Heart right ventricle (tissue), 16 donors: ENCODE measurements at regions of chr2 and their contacts with region 1.

Region 1: DNA sequence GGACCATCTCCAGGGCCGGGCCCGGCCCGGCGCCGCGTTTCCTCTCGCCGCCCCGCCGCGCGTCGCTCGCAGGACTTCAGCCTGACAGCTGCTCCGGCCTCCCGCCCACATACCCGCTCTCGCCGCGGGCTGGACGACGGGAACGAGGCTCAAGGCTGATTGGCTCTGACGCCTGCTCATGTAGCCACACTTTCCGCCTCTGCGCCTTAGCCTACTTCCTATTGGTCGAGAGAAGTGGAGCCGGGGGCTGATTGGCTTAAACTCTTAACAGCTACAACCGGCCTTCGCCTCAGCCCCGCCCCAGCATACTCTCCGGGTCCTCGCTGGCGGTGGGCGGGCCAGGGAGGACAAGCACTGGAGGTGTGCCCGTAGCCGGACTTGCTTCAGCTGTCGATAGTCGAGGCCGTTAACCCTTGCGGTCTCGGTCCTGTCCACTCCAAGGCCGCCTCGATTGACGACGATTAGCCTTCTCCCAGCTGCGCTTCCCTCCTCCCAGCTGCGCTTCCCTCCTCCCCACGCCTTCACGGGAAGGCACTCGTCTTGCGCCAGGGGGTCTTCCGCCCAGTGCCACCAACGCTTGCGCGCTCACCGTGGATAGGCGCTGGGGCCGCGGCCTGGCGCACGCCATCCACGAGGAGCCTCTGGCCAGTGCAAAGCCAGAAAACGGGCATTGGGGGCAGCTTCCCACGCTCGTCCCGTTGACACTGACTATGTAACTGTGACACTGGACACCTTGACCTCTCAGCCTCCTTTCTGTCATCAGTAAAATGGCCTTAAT is at the start of gene PRADC1:
- DNase-seq: peak; percentile 95 to 99
- ATAC-seq: peak; percentile 91 to 97 (median 96)
- H3K4me3 ChIP-seq: peak within 1 kb of the TSS; percentile 70 to 95 (median 88)
- H3K27ac ChIP-seq: peak within 1 kb of the TSS; percentile 88 to 98 (median 94)
- H3K4me1 ChIP-seq: peaks cover 2 to 47% (median 35%) of the 10 kb centered on the region in 9 donors
- H3K27me3 ChIP-seq: no peaks in the 10 kb centered on the region
- CTCF ChIP-seq: no peak
- total RNA-seq, gene PRADC1: 61.2 to 96.5 (median 76.6) TPM

Region 2: DNA sequence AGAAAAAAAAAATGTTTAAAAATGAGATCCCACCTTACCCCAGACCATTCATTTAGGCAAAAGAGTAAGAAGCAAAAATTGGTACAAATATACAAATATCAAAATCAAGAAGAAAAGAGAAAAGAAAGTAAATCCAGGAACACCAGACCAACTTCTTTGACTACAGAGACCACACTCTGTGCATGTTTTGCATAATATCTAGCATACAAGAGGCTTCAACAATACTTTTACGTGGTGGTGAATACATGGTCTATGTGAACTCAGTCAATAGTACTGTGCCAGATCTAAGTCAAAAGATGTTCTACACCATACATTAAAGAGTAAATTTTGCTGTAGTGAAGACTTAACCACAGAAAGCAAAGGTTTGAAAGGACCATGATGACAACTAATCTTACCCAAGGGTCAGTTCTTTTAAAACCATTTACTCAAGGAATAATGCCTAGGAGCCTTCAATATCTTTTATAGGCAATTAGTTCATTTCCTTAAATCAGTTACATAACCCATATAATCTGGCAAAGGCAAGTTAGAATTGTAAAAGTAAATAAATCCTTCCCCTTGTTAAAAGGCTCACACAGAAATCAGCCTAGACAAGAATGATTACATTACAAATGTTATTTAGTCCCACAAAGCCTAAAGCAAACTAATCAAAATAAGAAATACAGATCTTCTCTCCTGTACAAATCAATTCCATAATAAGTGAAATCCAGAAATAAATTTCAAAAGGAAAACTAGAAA is 522.8 kb before region 1 on chr2:
- intact Hi-C with region 1: no loop called
- DNase-seq: no peak
- ATAC-seq: no peak
- H3K4me3 ChIP-seq: no peak overlapping the region
- H3K27ac ChIP-seq: no peak overlapping the region
- H3K4me1 ChIP-seq: peaks cover 0 to 8% (median 0%) of the 10 kb centered on the region in 9 donors
- H3K27me3 ChIP-seq: no peaks in the 10 kb centered on the region
- CTCF ChIP-seq: no peak

Region 3: DNA sequence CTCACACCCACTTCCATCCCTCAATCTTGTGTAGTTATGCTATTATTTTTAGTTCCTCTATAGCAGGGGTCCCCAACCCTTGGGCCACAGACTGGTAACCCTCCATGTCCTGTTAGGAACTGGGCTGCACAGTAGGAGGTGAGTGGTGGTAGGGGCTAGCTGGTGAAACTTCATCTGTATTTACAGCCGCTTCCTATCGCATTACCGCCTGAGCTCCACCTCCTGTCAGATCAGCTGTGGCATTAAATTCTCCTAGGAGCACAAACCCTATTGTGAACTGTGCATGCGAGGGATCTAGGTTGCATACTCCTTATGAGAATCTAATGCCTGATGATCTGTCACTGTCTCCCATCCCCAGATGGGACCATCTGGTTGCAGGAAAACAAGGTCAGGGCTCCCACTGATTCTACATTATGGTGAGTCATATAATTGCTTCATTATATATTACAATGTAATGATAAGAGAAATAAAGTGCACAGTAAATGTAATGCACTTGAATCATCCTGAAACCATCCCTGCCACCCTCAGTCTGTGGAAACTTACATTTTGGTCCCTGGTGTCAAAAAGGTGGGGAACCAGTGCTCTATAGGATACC is 119.0 kb before region 1 on chr2:
- intact Hi-C with region 1: no loop called
- DNase-seq: no peak
- ATAC-seq: no peak
- H3K4me3 ChIP-seq: no peak overlapping the region
- H3K27ac ChIP-seq: peak overlapping the region in 2 of 10 donors; percentile 78 to 82
- H3K4me1 ChIP-seq: peaks cover 17 to 38% (median 31%) of the 10 kb centered on the region in 9 donors
- H3K27me3 ChIP-seq: peaks cover 0 to 23% (median 0%) of the 10 kb centered on the region in 7 donors
- CTCF ChIP-seq: no peak

Region 4: DNA sequence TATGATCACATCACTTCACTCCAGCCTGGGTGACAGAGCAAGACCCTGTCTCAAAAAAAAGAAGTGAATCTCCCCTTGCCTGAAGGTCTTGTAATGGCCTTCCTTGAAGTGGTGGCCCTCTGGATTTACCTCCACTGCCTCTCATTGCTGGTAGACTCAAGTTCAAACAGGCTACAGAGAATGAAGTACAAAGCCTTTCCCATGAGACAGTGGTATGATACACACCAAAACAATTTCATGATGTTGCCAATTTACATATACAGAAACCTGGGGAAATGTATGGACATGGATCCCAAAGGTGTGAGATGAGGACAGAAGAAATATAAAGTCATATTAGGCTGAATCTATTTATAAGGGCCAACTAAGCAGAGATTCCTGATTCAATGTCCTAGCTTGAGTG is 35.8 kb before region 1 on chr2:
- intact Hi-C with region 1: no loop called
- DNase-seq: no peak
- ATAC-seq: no peak
- H3K4me3 ChIP-seq: no peak overlapping the region
- H3K27ac ChIP-seq: no peak overlapping the region
- H3K4me1 ChIP-seq: peaks cover 4 to 10% (median 9%) of the 10 kb centered on the region in 9 donors
- H3K27me3 ChIP-seq: peaks cover 16 to 72% (median 62%) of the 10 kb centered on the region in 7 donors
- CTCF ChIP-seq: no peak

Region 5: DNA sequence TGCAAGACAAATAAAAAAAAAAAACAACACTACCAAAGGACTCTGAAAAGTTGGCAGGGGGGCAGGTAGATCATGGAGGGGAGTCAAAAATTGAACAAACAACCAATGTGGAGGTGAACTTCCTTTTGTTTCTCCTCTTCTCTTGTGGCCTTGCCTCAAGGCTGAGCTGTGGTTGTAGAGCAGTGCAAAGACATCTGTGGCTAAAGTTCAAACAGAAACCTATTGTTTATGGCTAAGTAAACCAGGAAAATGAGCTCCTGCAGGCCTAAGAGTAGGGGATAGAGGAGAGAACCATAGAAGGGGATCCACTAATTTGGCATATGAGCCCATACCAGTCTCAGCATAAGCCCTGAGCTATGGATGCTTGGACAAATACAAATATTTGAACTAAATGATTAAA is 100.2 kb after region 1 on chr2:
- intact Hi-C with region 1: no loop called
- DNase-seq: no peak
- ATAC-seq: no peak
- H3K4me3 ChIP-seq: no peak overlapping the region
- H3K27ac ChIP-seq: no peak overlapping the region
- H3K4me1 ChIP-seq: no peaks in the 10 kb centered on the region
- H3K27me3 ChIP-seq: peaks cover 0 to 9% (median 4%) of the 10 kb centered on the region in 7 donors
- CTCF ChIP-seq: no peak

Region 6: DNA sequence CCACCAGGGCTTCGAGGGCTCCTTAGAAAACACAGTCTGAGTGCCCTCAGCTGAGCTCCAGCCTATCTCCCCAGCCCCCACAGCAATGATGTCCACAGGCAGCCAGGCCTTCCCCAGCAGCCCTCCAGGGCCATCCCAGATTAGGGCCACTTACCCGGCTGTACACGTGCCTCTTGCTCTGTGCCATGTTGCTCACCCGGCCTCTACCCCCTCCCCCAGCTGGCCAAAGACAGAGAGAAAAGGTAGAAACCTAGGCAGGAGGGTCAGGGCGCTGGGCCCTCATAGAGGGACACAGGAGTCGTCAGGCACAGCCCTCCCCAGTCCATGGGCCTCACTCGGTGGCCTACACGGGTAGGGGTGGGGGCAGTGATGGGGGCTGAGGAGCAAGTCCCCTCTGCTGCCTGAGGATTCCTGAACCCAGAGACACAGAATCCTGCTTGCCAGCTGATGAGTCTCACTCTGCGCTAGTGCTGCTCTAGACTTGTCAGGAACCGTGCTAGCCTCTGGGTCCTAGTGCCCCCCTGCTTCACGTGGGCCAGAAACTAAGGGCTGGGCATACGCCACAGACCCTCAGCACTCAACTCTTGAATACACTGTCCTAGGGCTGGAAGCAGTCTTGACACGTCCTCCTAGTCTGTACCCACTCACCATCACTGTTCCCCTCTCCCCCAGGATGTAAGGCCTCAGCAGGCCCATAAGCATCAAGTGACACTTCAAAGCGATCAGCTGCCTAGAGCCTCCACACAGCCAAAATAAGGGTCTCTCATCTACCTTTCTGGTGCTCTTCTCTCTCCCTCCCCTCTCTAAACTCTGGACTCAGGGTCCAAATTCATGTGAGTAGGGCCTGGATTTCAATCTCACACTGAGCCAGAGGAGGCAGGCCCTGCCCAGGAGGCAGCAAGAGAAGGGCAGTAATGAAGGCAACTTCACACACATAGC is 1146.8 kb after region 1 on chr2 and contains the start of gene DCTN1:
- intact Hi-C with region 1: loop called in 1 of 10 experiments (anchors 10 kb)
- DNase-seq: peak in 1 of 2 donors; percentile 55
- ATAC-seq: peak; percentile 74 to 89 (median 82)
- H3K4me3 ChIP-seq: peak within 1 kb of the TSS in 9 of 10 donors; percentile 23 to 54 (median 45)
- H3K27ac ChIP-seq: peak within 1 kb of the TSS in 9 of 10 donors; percentile 1 to 85 (median 74)
- H3K4me1 ChIP-seq: peaks cover 14 to 76% (median 65%) of the 10 kb centered on the region in 9 donors
- H3K27me3 ChIP-seq: no peaks in the 10 kb centered on the region
- CTCF ChIP-seq: no peak
- total RNA-seq, gene DCTN1: 140 to 285 (median 195) TPM